ENCODE measurements at regions of chr9 and their contacts with region 1.

Region 1: GRCh38 chr9:21965401-21965951 is 28.7 kb downstream of the CDKN2A start:
- DNase-seq: peak; percentile 85
- H3K4me3 Mint-ChIP-seq: peak overlapping the region; percentile 70
- H3K27ac Mint-ChIP-seq: peak overlapping the region; percentile 72
- H3K4me1 Mint-ChIP-seq: peaks cover 31% of the 10 kb centered on the region
- H3K27me3 Mint-ChIP-seq: peaks cover 85% of the 10 kb centered on the region

Region 2: GRCh38 chr9:21831961-21832509 is 133.4 kb before region 1 on chr9:
- intact Hi-C with region 1: loop called (anchors 5 kb)
- DNase-seq: peak; percentile 84
- H3K4me3 Mint-ChIP-seq: peak overlapping the region; percentile 15
- H3K27ac Mint-ChIP-seq: peak overlapping the region; percentile 29
- H3K4me1 Mint-ChIP-seq: peaks cover 57% of the 10 kb centered on the region
- H3K27me3 Mint-ChIP-seq: no peaks in the 10 kb centered on the region

Region 3: GRCh38 chr9:22238809-22239684 is 273.6 kb after region 1 on chr9:
- intact Hi-C with region 1: loop called (anchors 2 kb)
- DNase-seq: no peak
- H3K4me3 Mint-ChIP-seq: no peak overlapping the region
- H3K27ac Mint-ChIP-seq: no peak overlapping the region
- H3K4me1 Mint-ChIP-seq: peaks cover 36% of the 10 kb centered on the region
- H3K27me3 Mint-ChIP-seq: peaks cover 57% of the 10 kb centered on the region

Region 4: GRCh38 chr9:22332202-22332601 is 366.7 kb after region 1 on chr9:
- intact Hi-C with region 1: no loop called
- DNase-seq: no peak
- H3K4me3 Mint-ChIP-seq: no peak overlapping the region
- H3K27ac Mint-ChIP-seq: no peak overlapping the region
- H3K4me1 Mint-ChIP-seq: no peaks in the 10 kb centered on the region
- H3K27me3 Mint-ChIP-seq: no peaks in the 10 kb centered on the region

Region 5: DNA sequence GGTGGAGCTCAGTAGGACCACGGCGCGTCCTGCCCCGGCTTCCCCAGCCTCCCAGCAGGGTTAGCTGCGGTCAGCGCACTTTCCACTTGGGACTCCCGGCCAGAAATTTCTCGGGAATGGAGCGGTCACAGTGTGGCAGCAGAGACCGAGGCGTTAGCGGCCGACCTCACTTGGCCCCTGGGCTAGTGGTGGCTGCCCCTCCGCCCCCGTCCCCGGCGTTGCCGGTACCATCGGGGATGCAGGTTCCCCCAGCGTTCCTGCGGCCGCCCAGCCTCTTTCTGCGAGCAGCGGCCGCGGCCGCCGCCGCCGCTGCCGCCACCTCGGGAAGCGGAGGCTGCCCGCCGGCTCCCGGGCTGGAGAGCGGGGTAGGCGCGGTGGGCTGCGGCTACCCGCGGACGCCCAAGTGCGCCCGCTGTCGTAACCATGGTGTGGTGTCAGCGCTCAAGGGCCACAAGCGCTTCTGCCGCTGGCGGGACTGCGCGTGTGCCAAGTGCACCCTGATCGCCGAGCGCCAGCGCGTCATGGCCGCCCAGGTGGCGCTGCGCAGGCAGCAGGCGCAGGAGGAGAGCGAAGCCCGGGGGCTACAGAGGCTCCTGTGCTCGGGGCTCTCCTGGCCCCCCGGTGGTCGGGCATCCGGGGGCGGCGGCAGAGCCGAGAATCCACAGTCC is 481.6 kb after region 1 on chr9:
- intact Hi-C with region 1: loop called (anchors 5 kb)
- DNase-seq: peak; percentile 68
- H3K4me3 Mint-ChIP-seq: no peak overlapping the region
- H3K27ac Mint-ChIP-seq: no peak overlapping the region
- H3K4me1 Mint-ChIP-seq: peaks cover 3% of the 10 kb centered on the region
- H3K27me3 Mint-ChIP-seq: peaks cover 46% of the 10 kb centered on the region